ENCODE measurements at regions of chr17 and their contacts with region 1.

Region 1: DNA sequence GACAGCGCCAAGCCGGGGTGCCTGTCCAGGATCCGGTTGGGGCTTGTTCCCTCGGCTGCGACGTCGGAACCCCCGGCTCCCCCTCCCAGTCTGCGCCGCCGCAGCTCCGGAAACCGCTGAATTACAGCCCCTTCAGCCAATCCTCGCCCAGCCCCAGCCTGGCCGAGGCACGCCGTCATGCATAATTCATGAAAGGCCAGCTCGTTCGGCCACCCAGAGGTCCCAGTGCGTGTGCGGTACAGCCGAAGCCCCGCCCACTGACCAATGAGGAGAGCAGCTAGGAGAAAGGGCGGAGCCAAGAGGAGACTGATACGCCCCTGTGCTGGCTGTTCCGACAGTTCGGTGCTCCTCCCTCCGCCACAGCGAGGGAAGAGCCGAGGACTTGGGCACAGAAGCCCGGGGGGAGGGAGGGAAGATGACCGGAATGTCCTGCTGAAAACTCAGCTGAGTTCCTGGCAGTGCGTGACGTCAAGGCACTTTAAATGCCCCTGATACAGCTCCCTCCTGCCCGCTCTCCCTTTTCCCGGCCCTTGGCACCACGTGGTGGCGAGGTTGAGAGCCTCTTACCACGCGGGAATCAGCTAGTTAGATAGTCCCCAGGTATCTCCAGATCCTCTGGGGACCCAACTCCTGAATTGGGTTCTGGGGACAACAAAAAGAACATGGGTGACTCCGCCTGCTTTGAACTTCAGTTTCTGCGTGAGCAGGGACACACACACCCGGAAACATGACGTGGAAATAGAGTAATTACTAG is at the start of gene STAT3:
- DNase-seq: peak; percentile 100
- ATAC-seq: peak; percentile 91
- H3K4me3 Mint-ChIP-seq: peak within 1 kb of the TSS; percentile 98
- H3K27ac Mint-ChIP-seq: peak within 1 kb of the TSS; percentile 99
- H3K4me1 Mint-ChIP-seq: peaks cover 54% of the 10 kb centered on the region
- H3K27me3 Mint-ChIP-seq: no peaks in the 10 kb centered on the region
- total RNA-seq, gene STAT3: 90.5 to 97.6 TPM

Region 2: DNA sequence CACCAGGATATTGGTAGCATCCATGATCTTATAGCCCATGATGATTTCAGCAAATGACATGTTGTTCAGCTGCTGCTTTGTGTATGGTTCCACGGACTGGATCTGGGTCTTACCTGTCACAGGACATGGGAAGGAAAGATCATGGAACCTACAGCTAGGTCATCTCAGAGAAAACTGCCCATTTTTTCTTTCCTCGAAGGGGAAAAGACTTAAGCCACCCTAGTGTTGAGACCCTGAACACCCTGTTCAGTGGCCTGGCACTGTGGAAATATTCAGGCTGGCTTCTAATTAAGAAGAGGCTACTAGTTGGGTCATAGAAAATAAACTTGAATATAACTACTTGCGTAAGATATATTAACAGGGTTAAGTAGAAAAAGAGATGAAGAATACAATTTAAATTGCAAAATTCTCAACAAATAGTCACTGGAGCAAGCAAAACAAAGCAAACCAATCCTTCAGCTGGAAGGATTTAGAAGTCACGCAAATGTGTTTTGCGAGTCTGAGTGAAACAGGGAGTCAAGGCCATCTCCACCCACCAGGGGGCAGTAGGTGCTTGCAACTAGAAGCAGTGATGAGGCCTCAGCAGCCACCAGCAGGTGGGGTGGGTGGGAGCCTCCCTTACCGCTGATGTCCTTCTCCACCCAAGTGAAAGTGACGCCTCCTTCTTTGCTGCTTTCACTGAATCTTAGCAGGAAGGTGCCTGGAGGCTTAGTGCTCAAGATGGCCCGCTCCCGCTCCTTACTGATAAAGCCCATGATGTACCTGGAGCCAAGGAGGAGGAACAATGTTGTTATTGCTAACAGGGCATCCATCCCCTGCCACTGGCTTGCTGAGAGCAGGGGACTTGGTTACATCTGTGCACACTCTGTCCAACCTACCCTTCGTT is 65.9 kb before region 1 on chr17:
- CTCF ChIA-PET with region 1: interaction called, 967 read pairs
- DNase-seq: peak; percentile 97
- ATAC-seq: peak; percentile 96
- H3K4me3 Mint-ChIP-seq: no peak overlapping the region
- H3K27ac Mint-ChIP-seq: peak overlapping the region; percentile 24
- H3K4me1 Mint-ChIP-seq: peaks cover 44% of the 10 kb centered on the region
- H3K27me3 Mint-ChIP-seq: no peaks in the 10 kb centered on the region

Region 3: GRCh38 chr17:42340691-42341127 is 47.8 kb before region 1 on chr17:
- CTCF ChIA-PET with region 1: interaction called, 967 read pairs
- DNase-seq: peak; percentile 62
- ATAC-seq: peak; percentile 35
- H3K4me3 Mint-ChIP-seq: peak overlapping the region; percentile 3
- H3K27ac Mint-ChIP-seq: peak overlapping the region; percentile 96
- H3K4me1 Mint-ChIP-seq: peaks cover 65% of the 10 kb centered on the region
- H3K27me3 Mint-ChIP-seq: no peaks in the 10 kb centered on the region

Region 4: GRCh38 chr17:42399948-42400843 is 11.6 kb after region 1 on chr17:
- CTCF ChIA-PET with region 1: interaction called, 133 read pairs
- DNase-seq: no peak
- ATAC-seq: no peak
- H3K4me3 Mint-ChIP-seq: no peak overlapping the region
- H3K27ac Mint-ChIP-seq: peak overlapping the region; percentile 24
- H3K4me1 Mint-ChIP-seq: peaks cover 16% of the 10 kb centered on the region
- H3K27me3 Mint-ChIP-seq: peaks cover 11% of the 10 kb centered on the region

Region 5: DNA sequence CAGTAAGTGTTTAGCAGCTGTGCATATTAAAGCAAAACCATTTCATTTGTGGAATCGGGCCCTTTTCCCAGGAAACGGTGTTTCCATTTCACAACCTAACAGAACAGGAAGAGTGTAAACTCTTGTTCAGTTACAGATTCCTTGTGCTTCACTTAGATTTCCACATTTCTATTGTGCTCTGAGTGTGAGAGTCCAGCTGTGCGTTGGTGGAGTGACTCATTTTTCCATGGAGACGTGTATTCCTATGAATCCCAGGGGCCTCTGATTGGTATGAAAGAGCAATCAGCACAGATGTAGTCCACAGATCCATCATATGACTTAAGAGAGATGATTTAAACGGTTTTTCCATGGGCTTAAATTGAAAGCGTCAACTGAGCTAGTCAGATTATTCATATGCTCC is 47.8 kb after region 1 on chr17:
- CTCF ChIA-PET with region 1: no interaction called
- DNase-seq: no peak
- ATAC-seq: no peak
- H3K4me3 Mint-ChIP-seq: no peak overlapping the region
- H3K27ac Mint-ChIP-seq: no peak overlapping the region
- H3K4me1 Mint-ChIP-seq: peaks cover 3% of the 10 kb centered on the region
- H3K27me3 Mint-ChIP-seq: peaks cover 32% of the 10 kb centered on the region